Gastrocnemius medialis (tissue), 4 donors: ENCODE measurements at regions of chr19 and their contacts with region 1.

Region 1: GRCh38 chr19:48468775-48469288 is 337 bp upstream of the CYTH2 start:
- DNase-seq: peak; percentile 100
- ATAC-seq: peak; percentile 95
- H3K4me3 ChIP-seq: peak overlapping the region; percentile 76 to 99 (median 90)
- H3K27ac ChIP-seq: peak overlapping the region; percentile 89 to 95 (median 94)
- H3K4me1 ChIP-seq: peaks cover 14 to 18% of the 10 kb centered on the region in 2 donors
- H3K27me3 ChIP-seq: no peaks in the 10 kb centered on the region
- CTCF ChIP-seq: no peak
- POLR2A ChIP-seq: no peak

Region 2: DNA sequence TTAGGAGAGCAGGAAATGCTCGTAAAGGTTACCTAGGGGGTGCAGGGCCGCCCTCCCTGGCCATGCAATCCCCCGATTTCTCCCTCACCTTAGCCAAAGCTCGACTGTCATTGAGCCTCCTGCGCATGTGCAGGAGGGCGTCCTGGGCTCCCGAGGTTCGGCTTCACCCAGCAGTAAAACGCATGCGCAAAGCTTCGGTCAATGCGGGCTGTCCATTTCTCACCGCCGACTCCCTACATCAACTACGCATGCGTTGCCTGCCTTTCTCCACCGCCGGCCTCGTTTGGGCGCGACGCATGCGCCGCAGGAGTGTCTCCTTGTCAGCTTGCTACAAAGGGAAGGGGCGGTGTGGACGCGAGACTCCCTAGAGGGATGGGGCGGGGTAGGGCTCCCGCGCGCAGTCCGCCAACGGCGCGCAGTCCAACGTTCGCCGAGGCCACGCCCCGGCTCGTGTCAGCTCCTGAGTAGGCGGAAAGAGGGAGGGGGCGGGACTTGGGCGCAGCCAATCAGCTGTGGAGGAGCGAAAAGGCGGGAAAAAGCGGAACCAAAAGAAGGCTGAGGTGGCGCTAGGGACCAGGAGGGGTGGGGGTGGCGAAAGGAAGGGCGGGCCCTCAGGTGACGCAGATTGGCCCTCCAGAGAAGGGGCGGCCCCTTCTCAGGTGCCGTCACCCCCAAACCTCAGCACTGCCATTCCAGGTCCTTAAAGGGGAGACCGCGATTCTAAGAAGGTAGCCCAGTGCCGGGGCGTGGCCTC is 104.8 kb before region 1 on chr19 and contains the starts of genes SYNGR4 and TMEM143:
- in situ Hi-C with region 1: no loop called
- intact Hi-C with region 1: loop called (anchors 2 kb)
- DNase-seq: peak; percentile 98 to 99
- ATAC-seq: peak; percentile 94 to 97
- H3K4me3 ChIP-seq: peak within 1 kb of the TSS; percentile 75 to 99 (median 84)
- H3K27ac ChIP-seq: peak within 1 kb of the TSS; percentile 97 to 100 (median 99)
- H3K4me1 ChIP-seq: peaks cover 4 to 10% of the 10 kb centered on the region in 2 donors
- H3K27me3 ChIP-seq: no peaks in the 10 kb centered on the region
- CTCF ChIP-seq: no peak
- POLR2A ChIP-seq: peak in 1 of 2 donors; percentile 35
- total RNA-seq, gene SYNGR4: not detected
- total RNA-seq, gene TMEM143: 28.8 to 42.3 (median 40.7) TPM

Region 3: DNA sequence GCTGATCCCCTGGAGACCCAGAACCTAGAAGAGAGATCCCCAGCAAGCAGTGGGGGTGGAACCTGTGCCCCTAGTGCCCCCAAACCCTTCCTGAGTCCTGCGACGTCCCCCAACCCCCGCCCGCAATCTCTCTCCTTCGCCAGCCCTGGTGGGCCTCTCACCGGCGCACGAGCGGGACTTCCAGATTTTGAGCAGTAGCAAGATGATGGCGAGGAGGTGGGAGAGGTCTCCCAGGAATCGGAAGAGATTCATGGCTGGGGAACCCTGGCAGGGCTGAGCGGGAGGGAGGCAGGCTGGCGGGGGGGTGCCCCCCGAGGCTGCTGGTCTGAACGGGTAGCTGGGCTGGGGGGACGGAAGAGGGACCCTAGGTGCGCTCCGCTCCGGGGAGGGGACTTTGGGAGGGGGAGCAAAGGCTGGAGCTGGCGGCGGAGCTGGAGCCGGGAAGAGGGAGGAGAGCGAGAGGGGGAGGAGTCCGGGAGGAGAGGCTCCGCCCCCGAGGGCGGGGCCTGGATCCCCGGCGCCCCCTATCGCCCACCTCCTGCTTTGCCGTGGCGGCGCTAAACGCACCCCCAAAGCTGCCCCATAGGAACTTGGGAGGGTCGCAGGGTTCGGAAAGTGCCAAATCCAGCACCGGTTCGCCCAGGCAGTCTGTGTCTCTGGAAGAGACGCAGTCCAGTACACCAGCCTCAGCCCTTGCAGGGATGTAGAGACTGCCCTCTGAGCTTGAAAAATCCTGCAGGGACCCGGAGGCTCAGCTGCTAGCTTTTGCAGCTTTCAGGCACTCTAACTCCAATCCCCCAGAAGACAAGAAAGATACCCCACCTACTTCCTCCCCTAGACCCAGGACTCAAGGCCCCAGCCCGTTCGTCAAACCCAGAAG is 77.5 kb before region 1 on chr19 and contains the start of gene KDELR1:
- in situ Hi-C with region 1: no loop called
- intact Hi-C with region 1: loop called (anchors 2 kb)
- DNase-seq: peak; percentile 58 to 66
- ATAC-seq: peak; percentile 91 to 92
- H3K4me3 ChIP-seq: peak within 1 kb of the TSS; percentile 83 to 100 (median 92)
- H3K27ac ChIP-seq: peak within 1 kb of the TSS; percentile 85 to 91 (median 88)
- H3K4me1 ChIP-seq: peaks cover 4 to 19% of the 10 kb centered on the region in 2 donors
- H3K27me3 ChIP-seq: peaks cover 36 to 41% (median 41%) of the 10 kb centered on the region in 3 donors
- CTCF ChIP-seq: peak; percentile 78 to 96 (median 87)
- POLR2A ChIP-seq: peak; percentile 60 to 68
- total RNA-seq, gene KDELR1: 44.9 to 64.7 (median 54.0) TPM

Region 4: DNA sequence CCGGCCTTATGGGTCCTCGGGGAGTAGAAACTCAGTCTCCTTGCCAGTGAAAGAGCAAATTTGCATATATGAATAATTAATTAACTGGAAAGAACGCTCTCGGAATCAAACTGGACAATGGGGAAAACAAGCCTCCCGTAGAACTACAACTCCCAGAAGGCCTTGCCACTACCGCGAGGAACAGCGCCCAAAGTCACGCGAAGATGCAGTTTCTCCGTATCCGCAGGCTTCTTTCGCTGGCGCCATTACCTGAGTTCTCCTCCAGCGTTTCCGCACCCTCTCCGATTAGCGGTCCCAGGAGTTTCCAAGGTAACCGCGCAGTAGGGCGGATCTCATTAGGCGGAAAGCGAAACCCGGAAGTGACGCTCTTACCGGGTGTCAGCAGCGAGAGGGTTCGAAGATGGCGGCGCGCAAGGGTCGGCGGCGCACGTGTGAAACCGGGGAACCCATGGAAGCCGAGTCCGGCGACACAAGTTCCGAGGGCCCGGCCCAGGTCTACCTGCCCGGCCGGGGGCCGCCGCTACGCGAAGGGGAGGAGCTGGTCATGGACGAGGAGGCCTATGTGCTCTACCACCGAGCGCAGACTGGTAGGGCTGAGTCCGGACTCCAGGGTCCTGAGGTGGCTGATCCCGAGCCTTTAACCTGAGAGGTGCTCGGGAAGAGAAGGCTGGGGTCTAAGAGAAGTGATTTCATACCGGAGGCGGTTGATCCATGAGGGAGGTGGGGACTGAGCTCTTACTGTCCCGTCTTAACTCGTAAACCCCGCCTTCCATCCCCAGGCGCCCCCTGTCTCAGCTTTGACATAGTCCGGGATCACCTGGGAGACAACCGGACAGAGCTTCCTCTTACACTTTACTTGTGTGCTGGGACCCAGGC is 23.0 kb before region 1 on chr19 and contains the start of gene GRWD1:
- in situ Hi-C with region 1: no loop called
- intact Hi-C with region 1: loop called (anchors 1 kb)
- DNase-seq: peak; percentile 79 to 85
- ATAC-seq: peak; percentile 91 to 93
- H3K4me3 ChIP-seq: peak within 1 kb of the TSS; percentile 93 to 98 (median 96)
- H3K27ac ChIP-seq: peak within 1 kb of the TSS; percentile 87 to 92 (median 90)
- H3K4me1 ChIP-seq: peaks cover 18 to 22% of the 10 kb centered on the region in 2 donors
- H3K27me3 ChIP-seq: peaks cover 23 to 27% (median 25%) of the 10 kb centered on the region in 3 donors
- CTCF ChIP-seq: no peak
- POLR2A ChIP-seq: peak; percentile 49 to 79
- total RNA-seq, gene GRWD1: 27.8 to 36.0 (median 31.2) TPM

Region 5: DNA sequence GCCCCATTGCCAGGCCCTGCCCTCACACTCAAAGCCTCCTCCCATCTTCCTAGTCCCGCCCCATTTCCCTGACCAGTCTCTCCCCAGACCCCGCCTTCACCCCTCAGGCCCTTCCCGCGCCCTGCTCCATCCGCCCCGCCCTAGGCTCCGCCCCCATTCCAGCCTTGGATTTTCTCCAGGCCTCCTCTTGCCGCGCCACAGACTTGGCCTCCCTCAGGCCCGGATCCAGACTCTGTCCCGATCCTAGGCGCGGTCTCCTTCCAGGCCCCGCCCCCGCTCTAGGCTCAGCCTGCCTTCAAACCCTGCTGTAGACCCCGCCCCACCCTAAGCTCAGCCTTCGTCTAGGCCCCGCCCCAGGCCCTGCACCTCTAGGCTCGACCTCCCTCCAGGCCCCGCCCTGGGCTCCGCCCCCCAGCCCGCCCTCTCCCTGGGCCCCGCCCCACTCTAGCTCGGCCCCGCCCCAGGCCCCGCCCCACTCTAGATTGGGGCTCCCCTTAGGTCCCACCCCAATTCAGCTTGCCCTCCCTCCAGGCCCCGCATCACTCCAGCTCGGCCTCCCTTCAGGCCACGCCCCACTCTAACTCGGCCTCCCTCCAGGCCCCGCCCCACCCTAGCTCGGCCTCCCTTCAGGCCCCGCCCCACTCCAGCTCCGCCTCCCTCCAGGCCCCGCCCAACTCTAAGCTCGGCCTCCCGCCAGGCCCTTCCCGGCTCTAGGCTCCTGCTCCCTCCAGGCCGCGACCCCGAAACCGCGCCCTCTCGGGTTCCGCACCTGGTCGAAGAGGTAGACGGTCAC is 24.3 kb after region 1 on chr19:
- in situ Hi-C with region 1: no loop called
- intact Hi-C with region 1: loop called (anchors 2 kb)
- DNase-seq: peak; percentile 80 to 83
- ATAC-seq: peak; percentile 67 to 70
- H3K4me3 ChIP-seq: peak overlapping the region; percentile 51 to 63 (median 52)
- H3K27ac ChIP-seq: peak overlapping the region; percentile 6 to 68 (median 54)
- H3K4me1 ChIP-seq: peaks cover 3 to 8% of the 10 kb centered on the region in 2 donors
- H3K27me3 ChIP-seq: peaks cover 25 to 50% (median 40%) of the 10 kb centered on the region in 3 donors
- CTCF ChIP-seq: no peak
- POLR2A ChIP-seq: peak in 1 of 2 donors; percentile 39

Region 6: GRCh38 chr19:49590071-49590970 is 1121.5 kb after region 1 on chr19:
- in situ Hi-C with region 1: no loop called
- intact Hi-C with region 1: loop called (anchors 10 kb)
- DNase-seq: peak; percentile 84 to 95
- ATAC-seq: peak; percentile 68 to 74
- H3K4me3 ChIP-seq: peak overlapping the region; percentile 62 to 82 (median 70)
- H3K27ac ChIP-seq: peak overlapping the region; percentile 86 to 95 (median 94)
- H3K4me1 ChIP-seq: peaks cover 14 to 15% of the 10 kb centered on the region in 2 donors
- H3K27me3 ChIP-seq: no peaks in the 10 kb centered on the region
- CTCF ChIP-seq: no peak
- POLR2A ChIP-seq: peak; percentile 65 to 72